HepG2 (cell line): ENCODE measurements at regions of chr19 and their contacts with region 1.

Region 1: GRCh38 chr19:12757544-12758274 is 6.1 kb downstream of the BEST2 start:
- DNase-seq: peak; percentile 70
- ATAC-seq: peak; percentile 90
- H3K4me3 ChIP-seq: peak overlapping the region; percentile 40 to 73 (median 51); a peak in 5 of 6 replicates
- H3K27ac ChIP-seq: no peak overlapping the region
- H3K4me1 ChIP-seq: peaks cover 14% of the 10 kb centered on the region
- H3K27me3 ChIP-seq: peaks cover 0 to 11% of the 10 kb centered on the region in 2 experiments; a peak in 4 of 5 replicates
- CTCF ChIP-seq: peak; percentile 92
- EP300 ChIP-seq: no peak
- POLR2A ChIP-seq: no peak
- RAD21 ChIP-seq: peak; percentile 83

Region 2: GRCh38 chr19:12666265-12667048 is 91.3 kb before region 1 on chr19 and contains the starts of genes MAN2B1 and WDR83:
- CTCF ChIA-PET with region 1: no interaction called
- POLR2A ChIA-PET with region 1: no interaction called
- in situ Hi-C with region 1: no loop called
- intact Hi-C with region 1: no loop called
- DNase-seq: peak; percentile 65
- ATAC-seq: peak; percentile 89
- H3K4me3 ChIP-seq: peak within 1 kb of the TSS; percentile 72 to 84 (median 84)
- H3K27ac ChIP-seq: peak within 1 kb of the TSS; percentile 60
- H3K4me1 ChIP-seq: peaks cover 43% of the 10 kb centered on the region
- H3K27me3 ChIP-seq: no peaks in the 10 kb centered on the region; a peak in 1 of 5 replicates
- CTCF ChIP-seq: peak; percentile 1; the same call in 1 of the 2 replicates
- EP300 ChIP-seq: no peak
- POLR2A ChIP-seq: peak in 1 of 2 experiments; percentile 31; a peak in 2 of 4 replicates
- RAD21 ChIP-seq: no peak
- total RNA-seq, gene MAN2B1: 10.8 and 23.8 TPM in 2 replicates
- total RNA-seq, gene WDR83: 9.9 and 10.7 TPM in 2 replicates

Region 3: GRCh38 chr19:12711187-12711586 is 46.5 kb before region 1 on chr19:
- CTCF ChIA-PET with region 1: no interaction called
- POLR2A ChIA-PET with region 1: no interaction called
- in situ Hi-C with region 1: loop called (anchors 5 kb)
- intact Hi-C with region 1: no loop called
- DNase-seq: no peak
- ATAC-seq: no peak
- H3K4me3 ChIP-seq: no peak overlapping the region
- H3K27ac ChIP-seq: no peak overlapping the region
- H3K4me1 ChIP-seq: no peaks in the 10 kb centered on the region
- H3K27me3 ChIP-seq: no peaks in the 10 kb centered on the region
- CTCF ChIP-seq: no peak
- EP300 ChIP-seq: no peak
- POLR2A ChIP-seq: no peak
- RAD21 ChIP-seq: no peak

Region 4: GRCh38 chr19:12716861-12717260 is 40.8 kb before region 1 on chr19:
- CTCF ChIA-PET with region 1: interaction called, 7 read pairs
- POLR2A ChIA-PET with region 1: no interaction called
- in situ Hi-C with region 1: loop called (anchors 5 kb)
- intact Hi-C with region 1: loop called (anchors 1 kb)
- DNase-seq: peak; percentile 75
- ATAC-seq: peak; percentile 75
- H3K4me3 ChIP-seq: no peak overlapping the region
- H3K27ac ChIP-seq: no peak overlapping the region
- H3K4me1 ChIP-seq: peaks cover 9% of the 10 kb centered on the region
- H3K27me3 ChIP-seq: no peaks in the 10 kb centered on the region; a peak in 1 of 5 replicates
- CTCF ChIP-seq: peak; percentile 72
- EP300 ChIP-seq: no peak
- POLR2A ChIP-seq: no peak
- RAD21 ChIP-seq: peak; percentile 65

Region 5: GRCh38 chr19:12736995-12737834 is 20.5 kb before region 1 on chr19 and contains the start of gene GET3:
- CTCF ChIA-PET with region 1: no interaction called
- POLR2A ChIA-PET with region 1: interaction called, 10 read pairs
- in situ Hi-C with region 1: no loop called
- intact Hi-C with region 1: loop called (anchors 2 kb)
- DNase-seq: peak; percentile 100
- ATAC-seq: peak; percentile 93
- H3K4me3 ChIP-seq: peak within 1 kb of the TSS; percentile 88 to 98 (median 93)
- H3K27ac ChIP-seq: peak within 1 kb of the TSS; percentile 99
- H3K4me1 ChIP-seq: peaks cover 43% of the 10 kb centered on the region
- H3K27me3 ChIP-seq: no peaks in the 10 kb centered on the region; a peak in 1 of 5 replicates
- CTCF ChIP-seq: no peak
- EP300 ChIP-seq: no peak; a peak in 1 of 4 replicates
- POLR2A ChIP-seq: peak; percentile 77 to 92
- RAD21 ChIP-seq: 0 out of 2 replicates have a peak, but pooled peaks have one; percentile 29
- total RNA-seq, gene GET3: 51.5 and 57.7 TPM in 2 replicates

Region 6: DNA sequence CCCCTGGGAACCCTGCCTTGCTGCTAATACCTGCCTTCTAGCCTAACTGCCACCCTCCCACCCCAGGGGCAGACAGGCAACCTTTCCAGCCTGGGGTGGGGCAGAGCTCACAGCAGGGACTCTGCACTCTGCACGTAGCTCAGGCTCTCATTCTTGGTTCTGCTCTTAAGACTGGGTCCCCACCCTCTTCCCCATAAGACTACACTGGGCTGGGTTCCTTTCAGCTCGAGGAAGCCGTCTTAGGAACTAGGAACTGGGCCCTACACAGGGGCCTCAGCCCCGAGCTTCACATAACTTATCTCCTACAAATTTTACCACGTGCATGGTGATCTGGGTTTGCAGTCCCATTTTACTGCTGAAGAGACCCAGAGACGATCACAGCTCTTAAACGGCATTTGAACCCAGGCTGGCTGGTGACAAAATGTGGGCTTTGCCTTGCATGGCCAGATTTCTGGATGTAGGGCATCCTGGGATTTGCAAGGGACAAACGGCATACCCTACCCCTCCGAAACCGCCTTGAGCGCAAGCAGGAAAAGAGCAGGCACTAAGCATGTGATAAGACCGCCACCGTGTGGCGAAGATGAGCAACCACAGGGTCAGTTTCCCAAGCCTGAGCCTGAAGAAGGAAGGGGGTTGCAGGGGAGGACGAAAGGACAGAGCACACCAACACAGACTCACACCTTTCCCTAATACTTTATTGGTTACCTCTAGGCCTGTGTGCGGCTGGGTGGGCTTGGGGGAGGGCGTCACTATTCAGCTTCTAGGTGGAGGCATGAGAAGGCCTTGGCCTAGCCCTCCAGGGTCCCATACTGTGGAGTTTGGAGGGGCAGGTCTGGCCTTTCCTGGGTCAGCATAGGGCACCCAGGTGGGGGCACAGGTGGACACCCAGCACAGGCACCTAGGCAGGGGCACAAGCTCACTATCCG is 38.7 kb after region 1 on chr19:
- CTCF ChIA-PET with region 1: interaction called, 10 read pairs
- POLR2A ChIA-PET with region 1: interaction called, 14 read pairs
- in situ Hi-C with region 1: no loop called
- intact Hi-C with region 1: loop called (anchors 1 kb)
- DNase-seq: peak; percentile 68
- ATAC-seq: peak; percentile 28
- H3K4me3 ChIP-seq: peak overlapping the region in 1 of 3 experiments; percentile 24; a peak in 2 of 6 replicates
- H3K27ac ChIP-seq: no peak overlapping the region
- H3K4me1 ChIP-seq: peaks cover 38% of the 10 kb centered on the region
- H3K27me3 ChIP-seq: no peaks in the 10 kb centered on the region; a peak in 1 of 5 replicates
- CTCF ChIP-seq: peak; percentile 98
- EP300 ChIP-seq: no peak
- POLR2A ChIP-seq: 0 out of 4 replicates have a peak, but pooled peaks have one; percentile 22 to 48
- RAD21 ChIP-seq: peak; percentile 96